ENCODE measurements at regions of chr1 and their contacts with region 1.

Region 1: DNA sequence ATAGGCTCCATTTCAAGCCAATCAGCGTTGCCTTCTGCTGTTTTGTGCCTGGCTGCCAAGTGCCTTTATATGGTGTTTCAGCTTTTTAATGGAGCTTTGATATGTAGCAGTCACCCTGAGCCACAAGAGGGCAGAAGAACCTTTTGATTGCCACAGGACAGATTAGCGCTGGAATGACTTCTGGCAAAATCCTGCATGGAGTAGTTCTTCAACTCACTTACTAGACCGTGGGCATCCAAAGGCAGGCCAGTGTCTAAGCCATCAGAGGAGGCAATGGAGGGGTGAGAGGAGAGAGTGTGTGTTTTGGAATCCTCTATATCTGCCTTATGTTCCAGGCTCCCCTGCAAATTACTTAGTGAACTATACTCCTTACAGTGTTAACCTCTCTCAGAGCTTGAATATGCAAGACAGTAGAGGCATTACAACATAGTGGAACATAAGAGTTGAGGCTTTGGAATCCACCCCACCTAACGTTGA is 56.2 kb downstream of the ST3GAL3 start:
- DNase-seq: peak; percentile 86
- H3K4me3 ChIP-seq: no peak overlapping the region
- H3K27ac ChIP-seq: no peak overlapping the region
- H3K27me3 ChIP-seq: no peaks in the 10 kb centered on the region
- CTCF ChIP-seq: peak; percentile 93

Region 2: DNA sequence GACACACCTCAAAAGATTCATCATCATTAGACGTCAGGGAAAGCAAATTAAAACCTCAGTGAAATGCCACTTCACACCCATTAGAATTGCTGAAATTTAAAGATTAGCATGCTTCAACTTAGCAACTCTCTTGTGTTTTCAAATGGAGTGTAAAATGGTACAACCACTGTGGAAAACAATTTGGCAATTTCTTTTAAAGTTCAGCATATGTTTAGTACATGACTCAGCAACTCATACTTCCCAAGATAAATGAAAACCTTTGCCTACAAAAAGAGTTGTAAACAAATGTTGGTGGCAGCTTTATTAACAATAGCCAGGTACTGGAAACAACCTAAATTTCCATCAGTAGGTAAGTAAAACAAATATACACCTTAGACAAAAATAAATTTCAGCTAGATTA is 13.5 kb before region 1 on chr1:
- CTCF ChIA-PET with region 1: interaction called, 11 read pairs
- POLR2A ChIA-PET with region 1: no interaction called
- DNase-seq: no peak
- H3K4me3 ChIP-seq: no peak overlapping the region
- H3K27ac ChIP-seq: no peak overlapping the region
- H3K27me3 ChIP-seq: no peaks in the 10 kb centered on the region
- CTCF ChIP-seq: no peak

Region 3: GRCh38 chr1:43858328-43858731 is 94.8 kb after region 1 on chr1:
- CTCF ChIA-PET with region 1: interaction called, 10 read pairs
- POLR2A ChIA-PET with region 1: no interaction called
- DNase-seq: peak; percentile 96
- H3K4me3 ChIP-seq: no peak overlapping the region
- H3K27ac ChIP-seq: peak overlapping the region; percentile 39
- H3K27me3 ChIP-seq: no peaks in the 10 kb centered on the region
- CTCF ChIP-seq: no peak

Region 4: DNA sequence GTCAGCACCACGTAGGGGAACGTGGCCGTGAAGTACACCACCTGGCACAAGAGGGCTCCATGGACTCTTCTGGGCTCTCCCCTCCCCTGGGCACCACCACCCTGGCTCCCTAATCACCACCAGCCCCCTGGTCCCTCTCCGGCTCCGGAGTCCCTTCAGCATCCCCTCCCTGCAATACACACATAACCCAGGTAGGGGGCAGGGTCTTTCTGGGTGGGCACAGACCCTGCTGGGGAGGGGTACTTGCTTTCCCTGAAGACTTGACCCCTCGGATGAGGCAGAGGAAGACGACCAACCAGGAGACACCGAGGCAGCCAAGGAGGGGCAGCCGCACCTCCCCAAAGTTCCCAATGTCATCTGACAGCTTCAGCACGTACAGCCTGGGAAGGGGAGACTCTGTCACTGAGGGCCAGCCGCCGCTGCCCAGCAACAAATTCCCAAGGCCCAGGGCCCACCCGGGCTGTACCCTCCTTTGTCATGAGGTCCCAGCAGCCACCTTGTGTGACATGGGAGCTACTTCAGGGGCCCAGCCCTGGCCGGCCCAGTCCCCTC is 239.1 kb after region 1 on chr1:
- CTCF ChIA-PET with region 1: interaction called, 11 read pairs
- POLR2A ChIA-PET with region 1: no interaction called
- DNase-seq: no peak
- H3K4me3 ChIP-seq: no peak overlapping the region
- H3K27ac ChIP-seq: no peak overlapping the region
- H3K27me3 ChIP-seq: no peaks in the 10 kb centered on the region
- CTCF ChIP-seq: peak; percentile 24; the same call in 1 of the 2 replicates

Region 5: GRCh38 chr1:44049839-44050238 is 286.3 kb after region 1 on chr1:
- CTCF ChIA-PET with region 1: interaction called, 39 read pairs
- POLR2A ChIA-PET with region 1: no interaction called
- DNase-seq: peak; percentile 82
- H3K4me3 ChIP-seq: no peak overlapping the region
- H3K27ac ChIP-seq: peak overlapping the region; percentile 79
- H3K27me3 ChIP-seq: no peaks in the 10 kb centered on the region
- CTCF ChIP-seq: no peak

Region 6: GRCh38 chr1:44072204-44072603 is 308.7 kb after region 1 on chr1:
- CTCF ChIA-PET with region 1: no interaction called
- POLR2A ChIA-PET with region 1: no interaction called
- DNase-seq: peak; percentile 89
- H3K4me3 ChIP-seq: no peak overlapping the region
- H3K27ac ChIP-seq: no peak overlapping the region
- H3K27me3 ChIP-seq: no peaks in the 10 kb centered on the region
- CTCF ChIP-seq: no peak

Region 7: DNA sequence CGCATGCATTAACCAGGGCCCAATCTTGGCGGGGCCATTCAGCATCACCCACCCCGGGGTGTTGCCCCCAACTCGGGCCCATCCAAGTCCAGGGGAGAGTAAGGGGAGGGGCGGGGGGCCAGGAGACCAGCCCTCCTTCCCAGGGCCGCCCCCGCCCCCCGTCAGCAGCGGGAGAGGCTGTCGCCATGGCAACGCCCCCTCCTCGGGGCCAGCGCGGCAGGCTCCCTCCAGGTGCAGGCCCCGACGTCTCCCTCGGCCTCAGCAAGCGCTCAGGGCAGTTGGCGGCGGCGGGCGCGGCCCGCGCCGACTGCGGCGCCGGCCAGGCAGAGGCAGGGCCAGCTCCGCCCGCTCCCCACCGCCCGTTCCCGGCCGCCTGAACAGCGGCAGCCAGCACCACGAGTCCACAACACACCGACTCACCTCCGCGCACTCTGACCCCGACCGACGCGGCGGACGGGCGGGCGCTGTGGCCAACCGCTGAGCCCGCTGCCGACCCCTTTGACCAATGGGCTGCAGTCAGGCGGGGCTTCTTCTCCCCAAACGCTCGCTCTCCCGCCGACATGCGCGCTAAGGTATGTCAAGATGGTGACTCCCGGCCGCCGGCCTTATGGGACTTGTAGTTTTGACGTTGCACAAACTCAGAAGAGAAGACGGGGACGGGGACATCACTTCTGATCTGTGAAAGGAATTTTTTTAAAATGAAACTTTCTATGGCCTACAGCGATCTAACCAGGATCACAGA is 591.5 kb after region 1 on chr1 and contains the start of gene ERI3:
- CTCF ChIA-PET with region 1: no interaction called
- POLR2A ChIA-PET with region 1: no interaction called
- DNase-seq: peak; percentile 91
- H3K4me3 ChIP-seq: peak within 1 kb of the TSS; percentile 77
- H3K27ac ChIP-seq: no peak within 1 kb of the TSS
- H3K27me3 ChIP-seq: no peaks in the 10 kb centered on the region
- CTCF ChIP-seq: no peak
- polyA plus RNA-seq, gene ERI3: 46.2 and 54.0 TPM in 2 replicates

Measured in AG04450 (cell line).